ENCODE measurements at regions of chr18 and their contacts with region 1.

Region 1: GRCh38 chr18:9433671-9434121 is 41.6 kb upstream of the RALBP1 start:
- DNase-seq: no peak
- H3K4me3 ChIP-seq: no peak overlapping the region
- H3K27ac ChIP-seq: no peak overlapping the region
- H3K4me1 ChIP-seq: peaks cover 6% of the 10 kb centered on the region
- H3K27me3 ChIP-seq: no peaks in the 10 kb centered on the region
- CTCF ChIP-seq: no peak
- EP300 ChIP-seq: no peak
- POLR2A ChIP-seq: no peak

Region 2: DNA sequence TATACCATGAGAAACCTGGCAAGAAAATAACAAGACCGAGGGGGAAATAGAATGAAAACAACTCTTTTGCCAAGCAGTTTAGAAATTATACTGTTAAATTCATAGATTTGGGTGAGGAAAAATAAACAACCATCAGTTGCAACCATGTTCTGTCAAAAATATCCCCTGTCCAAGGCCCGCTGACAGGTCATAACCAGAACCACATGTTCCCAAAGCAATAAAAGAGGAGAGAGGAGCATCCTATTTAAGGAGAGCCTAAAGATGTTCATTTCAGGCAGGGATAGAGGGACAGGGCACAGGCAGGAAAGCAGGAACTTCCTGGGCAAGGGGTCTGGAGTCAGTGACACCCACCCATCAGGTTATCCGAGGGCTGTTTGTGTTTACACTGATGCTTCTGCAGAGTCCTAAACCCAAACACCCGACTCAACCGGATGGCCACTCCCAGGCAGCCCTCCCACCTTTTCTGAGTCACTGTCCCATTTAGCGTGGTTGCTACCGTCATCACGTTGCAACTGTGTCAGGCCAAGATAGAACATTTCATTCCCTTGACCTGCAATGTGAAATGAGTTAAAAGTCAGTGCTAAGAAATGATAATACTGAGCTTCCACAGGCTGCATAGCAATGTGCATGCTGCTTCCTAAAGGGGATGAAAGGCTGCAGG is 1292.7 kb before region 1 on chr18:
- intact Hi-C with region 1: loop called in 1 of 4 experiments (anchors 10 kb)
- DNase-seq: peak in 4 of 5 donors; percentile 49 to 70 (median 51)
- H3K4me3 ChIP-seq: no peak overlapping the region
- H3K27ac ChIP-seq: peak overlapping the region in 1 of 2 donors; percentile 41
- H3K4me1 ChIP-seq: peaks cover 18% of the 10 kb centered on the region
- H3K27me3 ChIP-seq: no peaks in the 10 kb centered on the region
- CTCF ChIP-seq: no peak
- EP300 ChIP-seq: no peak
- POLR2A ChIP-seq: no peak

Region 3: GRCh38 chr18:9488538-9488937 is 54.8 kb after region 1 on chr18:
- intact Hi-C with region 1: no loop called
- DNase-seq: no peak
- H3K4me3 ChIP-seq: no peak overlapping the region
- H3K27ac ChIP-seq: no peak overlapping the region
- H3K4me1 ChIP-seq: peaks cover 3% of the 10 kb centered on the region
- H3K27me3 ChIP-seq: no peaks in the 10 kb centered on the region
- CTCF ChIP-seq: no peak
- EP300 ChIP-seq: no peak
- POLR2A ChIP-seq: no peak

Measured in ovary (tissue), 10 donors.